Mammary epithelial cell (primary cell): ENCODE measurements at regions of chr17 and their contacts with region 1.

Region 1: DNA sequence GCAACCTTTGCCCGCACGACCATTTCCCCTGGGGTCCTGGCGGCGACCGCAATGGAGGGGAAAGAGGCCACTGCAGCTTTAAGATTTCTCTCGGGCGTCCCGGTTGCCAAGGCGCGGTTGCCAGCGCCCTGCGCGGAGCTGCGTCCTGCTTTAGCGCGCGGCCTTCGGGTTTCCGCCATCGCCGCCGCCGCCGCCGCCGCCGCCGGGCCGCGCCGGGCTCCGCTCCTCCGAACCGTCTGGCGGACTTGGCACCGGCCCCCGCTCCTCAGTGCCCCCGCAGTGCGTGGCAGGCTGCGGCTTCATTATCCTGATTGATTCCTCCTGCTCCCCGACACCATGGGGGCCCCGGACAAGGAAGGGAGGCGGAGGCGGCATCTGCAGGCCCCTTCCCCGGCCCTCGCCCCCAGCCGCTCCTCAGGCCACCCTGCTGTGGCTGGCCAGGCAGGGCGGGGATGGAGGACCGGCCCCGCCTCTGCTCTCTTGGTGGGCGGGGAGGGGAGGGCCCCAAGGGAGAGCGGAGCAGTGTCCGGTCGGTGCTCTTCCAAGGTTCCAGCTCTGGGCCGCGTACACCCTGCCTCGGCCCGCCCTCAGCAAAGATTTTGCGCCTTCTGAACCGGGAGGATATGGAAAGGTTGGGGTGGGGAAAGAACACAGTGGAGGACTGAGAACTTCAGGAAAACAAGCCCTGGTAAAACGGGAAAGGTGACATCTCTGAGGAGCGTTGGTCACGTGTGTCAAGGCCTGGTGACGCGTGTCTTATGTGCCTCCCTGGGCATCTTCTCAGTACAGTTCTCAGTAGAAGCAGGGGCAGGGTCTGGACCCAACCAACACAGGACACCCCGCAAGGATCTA is 34.0 kb downstream of the NEUROD2 start:
- DNase-seq: peak; percentile 67
- H3K4me3 ChIP-seq: peak overlapping the region; percentile 52 to 61 (median 57)
- H3K27ac ChIP-seq: peak overlapping the region; percentile 48
- H3K4me1 ChIP-seq: peaks cover 4% of the 10 kb centered on the region
- H3K27me3 ChIP-seq: no peaks in the 10 kb centered on the region
- CTCF ChIP-seq: no peak

Region 2: GRCh38 chr17:39612291-39612894 is 38.7 kb after region 1 on chr17:
- CTCF ChIA-PET with region 1: no interaction called
- dilution Hi-C with region 1: loop called (anchors 5 kb)
- in situ Hi-C with region 1: no loop called
- intact Hi-C with region 1: no loop called
- DNase-seq: no peak
- H3K4me3 ChIP-seq: no peak overlapping the region
- H3K27ac ChIP-seq: no peak overlapping the region
- H3K4me1 ChIP-seq: peaks cover 2% of the 10 kb centered on the region
- H3K27me3 ChIP-seq: peaks cover 14% of the 10 kb centered on the region
- CTCF ChIP-seq: no peak

Region 3: GRCh38 chr17:39671651-39672521 is 98.2 kb after region 1 on chr17:
- CTCF ChIA-PET with region 1: no interaction called
- dilution Hi-C with region 1: loop called (anchors 5 kb)
- in situ Hi-C with region 1: no loop called
- intact Hi-C with region 1: no loop called
- DNase-seq: peak; percentile 15
- H3K4me3 ChIP-seq: no peak overlapping the region
- H3K27ac ChIP-seq: no peak overlapping the region
- H3K4me1 ChIP-seq: peaks cover 8% of the 10 kb centered on the region
- H3K27me3 ChIP-seq: no peaks in the 10 kb centered on the region
- CTCF ChIP-seq: peak; percentile 22 to 56

Region 4: GRCh38 chr17:39738931-39739884 is 165.5 kb after region 1 on chr17:
- CTCF ChIA-PET with region 1: no interaction called
- dilution Hi-C with region 1: loop called (anchors 10 kb)
- in situ Hi-C with region 1: no loop called
- intact Hi-C with region 1: no loop called
- DNase-seq: peak; percentile 87
- H3K4me3 ChIP-seq: peak overlapping the region; percentile 67 to 85 (median 75)
- H3K27ac ChIP-seq: peak overlapping the region; percentile 91
- H3K4me1 ChIP-seq: peaks cover 29% of the 10 kb centered on the region
- H3K27me3 ChIP-seq: no peaks in the 10 kb centered on the region
- CTCF ChIP-seq: no peak